Activated T-helper 1 cell treated with anti-CD3 and anti-CD28 coated beads, Interleukin-12 subunit alpha, Interleukin-12 subunit beta, Interleukin-2, Interleukin-4 antibody, amounts not matched to agents 30 ng/mL and 10 ng/mL and 1 ng/mL, durations not matched to agents 14 hours and 24 hours and 36 hours (primary cell): ENCODE measurements at regions of chr3 and their contacts with region 1.

Region 1: DNA sequence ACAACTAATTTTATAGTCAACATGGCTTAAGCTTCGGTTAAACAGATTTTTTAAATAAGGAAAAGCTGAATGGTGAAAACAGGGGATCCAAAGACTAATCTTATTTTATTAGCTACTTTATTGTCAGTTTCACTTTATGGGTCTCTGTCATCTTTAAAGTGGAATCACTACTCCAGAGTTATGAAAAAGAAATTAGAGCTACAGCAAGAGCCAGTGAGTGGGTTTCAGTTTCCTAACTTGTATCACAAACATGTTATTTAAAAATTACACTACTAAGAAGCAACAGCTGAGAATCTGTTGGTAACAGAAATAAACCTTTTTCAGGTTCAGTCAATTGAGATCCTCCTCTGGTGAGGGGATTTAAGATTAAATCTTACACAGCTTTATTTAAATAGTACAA is 10.0 kb downstream of the PHC3 start:
- DNase-seq: no peak
- H3K4me3 Mint-ChIP-seq: peak overlapping the region; percentile 50
- H3K27ac Mint-ChIP-seq: peak overlapping the region; percentile 43
- H3K4me1 Mint-ChIP-seq: peaks cover 49% of the 10 kb centered on the region
- H3K27me3 Mint-ChIP-seq: no peaks in the 10 kb centered on the region

Region 2: DNA sequence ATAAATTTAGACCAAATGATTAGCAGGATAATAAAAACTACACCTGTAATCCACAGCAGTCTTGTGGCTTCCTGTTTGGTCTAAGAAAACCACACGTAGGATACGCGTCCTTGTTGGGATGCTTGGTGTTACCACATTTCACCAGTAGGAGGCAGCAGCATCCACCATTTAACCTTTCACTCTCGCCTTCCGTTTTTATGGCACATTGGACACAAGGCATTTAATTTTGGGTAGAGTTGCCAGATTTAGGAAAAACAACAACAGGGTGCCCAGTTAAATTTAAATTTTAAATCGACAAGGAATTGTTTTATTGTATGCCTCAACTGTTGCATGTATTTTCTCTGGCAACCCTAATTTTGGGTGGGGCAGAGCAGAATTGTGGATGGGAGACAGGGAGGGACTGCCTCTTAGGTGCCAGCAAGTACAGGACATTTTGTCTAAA is 308.1 kb before region 1 on chr3:
- intact Hi-C with region 1: loop called (anchors 5 kb)
- DNase-seq: peak; percentile 44
- H3K4me3 Mint-ChIP-seq: no peak overlapping the region
- H3K27ac Mint-ChIP-seq: no peak overlapping the region
- H3K4me1 Mint-ChIP-seq: peaks cover 24% of the 10 kb centered on the region
- H3K27me3 Mint-ChIP-seq: peaks cover 25% of the 10 kb centered on the region